RWPE1 (cell line): ENCODE measurements at regions of chr2 and their contacts with region 1.

Region 1: GRCh38 chr2:11583840-11584524 is 50.1 kb downstream of the GREB1 start:
- DNase-seq: peak; percentile 91
- H3K27ac ChIP-seq: no peak overlapping the region
- CTCF ChIP-seq: peak; percentile 71

Region 2: GRCh38 chr2:11239666-11240462 is 344.1 kb before region 1 on chr2:
- CTCF ChIA-PET with region 1: no interaction called
- POLR2A ChIA-PET with region 1: no interaction called
- DNase-seq: no peak
- H3K27ac ChIP-seq: no peak overlapping the region
- CTCF ChIP-seq: no peak

Region 3: DNA sequence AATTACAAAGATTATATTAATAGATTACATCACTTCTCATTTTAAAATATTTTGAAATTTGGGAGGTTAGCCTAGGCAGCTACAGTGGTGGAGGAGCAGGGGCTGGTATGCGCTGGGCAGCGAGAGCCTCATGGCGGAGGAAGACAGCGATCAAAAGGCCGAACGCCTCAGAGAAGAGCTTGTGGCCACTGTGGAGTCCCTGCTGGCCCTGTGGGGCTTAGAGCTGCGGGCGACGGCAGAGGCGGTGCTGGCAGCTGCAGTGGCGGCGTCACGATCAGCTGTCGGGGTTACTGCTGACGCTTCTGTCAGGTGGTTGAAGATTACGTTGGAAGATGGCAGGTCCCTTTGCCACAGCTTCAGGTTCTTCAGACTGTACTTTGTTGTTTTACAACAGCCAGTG is 326.9 kb before region 1 on chr2:
- CTCF ChIA-PET with region 1: no interaction called
- POLR2A ChIA-PET with region 1: no interaction called
- DNase-seq: no peak
- H3K27ac ChIP-seq: no peak overlapping the region
- CTCF ChIP-seq: no peak

Region 4: GRCh38 chr2:11477994-11478393 is 106.0 kb before region 1 on chr2:
- CTCF ChIA-PET with region 1: interaction called, 141 read pairs
- POLR2A ChIA-PET with region 1: no interaction called
- DNase-seq: peak; percentile 67
- H3K27ac ChIP-seq: no peak overlapping the region
- CTCF ChIP-seq: peak; percentile 86

Region 5: GRCh38 chr2:11647834-11648600 is 64.0 kb after region 1 on chr2:
- CTCF ChIA-PET with region 1: no interaction called
- POLR2A ChIA-PET with region 1: no interaction called
- DNase-seq: peak; percentile 21
- H3K27ac ChIP-seq: no peak overlapping the region
- CTCF ChIP-seq: no peak

Region 6: GRCh38 chr2:11674983-11675382 is 91.0 kb after region 1 on chr2:
- CTCF ChIA-PET with region 1: no interaction called
- POLR2A ChIA-PET with region 1: no interaction called
- DNase-seq: no peak
- H3K27ac ChIP-seq: no peak overlapping the region
- CTCF ChIP-seq: no peak